Right cardiac atrium (tissue), 5 donors: ENCODE measurements at regions of chr12 and their contacts with region 1.

Region 1: DNA sequence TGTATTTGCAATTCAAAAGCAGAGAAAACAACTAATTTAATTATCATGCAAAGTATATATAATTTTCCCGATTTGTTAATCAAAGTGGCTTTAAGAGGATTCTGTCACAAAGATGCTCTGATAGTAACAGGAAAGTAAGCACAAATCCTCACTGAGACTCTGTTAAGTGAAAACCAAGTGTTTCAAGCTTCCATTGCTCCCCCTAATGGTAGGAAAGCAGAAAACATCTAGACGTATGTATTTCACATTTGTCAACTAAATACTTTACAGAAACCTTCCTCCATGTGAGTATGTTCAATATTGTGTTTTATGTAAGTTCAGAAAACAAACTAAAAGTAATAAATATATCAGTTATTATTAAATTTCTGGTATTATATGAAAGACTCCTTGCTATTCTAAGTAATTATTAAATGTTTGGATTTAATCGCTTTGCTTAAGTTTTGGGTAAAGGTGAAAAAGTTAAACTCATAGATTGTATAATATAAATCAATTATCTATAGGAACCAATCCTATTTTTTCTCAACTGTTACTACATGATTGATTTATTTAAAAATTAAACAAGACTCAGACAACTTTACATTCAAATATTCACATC is 1.5 kb upstream of the NTS start:
- DNase-seq: no peak
- ATAC-seq: no peak
- H3K4me3 ChIP-seq: no peak overlapping the region
- H3K27ac ChIP-seq: no peak overlapping the region
- H3K4me1 ChIP-seq: no peaks in the 10 kb centered on the region
- H3K27me3 ChIP-seq: no peaks in the 10 kb centered on the region

Region 2: DNA sequence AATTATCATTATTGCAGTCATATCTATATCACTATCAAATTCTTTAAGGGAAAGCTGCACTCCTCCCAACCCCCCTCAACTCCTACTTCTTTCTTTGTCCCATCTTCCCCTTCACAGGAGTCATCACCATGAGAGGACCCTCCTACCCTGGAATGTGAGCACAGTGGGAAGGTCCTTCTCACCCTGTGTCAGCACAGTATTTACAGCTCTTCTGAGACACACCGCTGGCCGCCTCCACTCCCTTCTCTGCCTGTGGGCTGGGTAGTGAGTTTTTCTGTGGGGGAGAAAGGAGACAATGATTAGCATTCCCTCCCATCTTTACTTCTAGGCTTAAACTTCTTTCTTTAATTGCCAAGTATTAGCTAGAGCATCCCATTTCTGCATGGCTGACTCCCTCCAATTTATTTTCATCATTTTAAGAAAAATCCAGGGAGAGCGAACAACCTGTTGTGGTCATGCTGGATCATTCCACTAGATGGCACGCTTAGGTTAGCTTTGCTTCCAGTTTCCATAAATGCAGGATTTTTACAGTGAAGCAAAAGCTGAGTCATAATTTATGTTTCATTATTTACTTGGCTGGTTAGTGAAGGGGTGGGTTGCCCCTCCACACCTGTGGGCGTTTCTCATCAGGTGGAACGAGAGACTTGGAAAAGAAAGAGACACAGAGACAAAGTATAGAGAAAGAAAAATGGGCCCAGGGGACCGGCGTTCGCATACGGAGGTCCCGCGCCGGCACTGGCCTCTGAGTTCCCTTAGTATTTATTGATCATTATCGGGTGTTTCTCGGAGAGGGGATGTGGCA is 404.0 kb before region 1 on chr12:
- intact Hi-C with region 1: loop called in 3 of 4 experiments (anchors 5 to 10 kb)
- DNase-seq: peak in 1 of 3 donors; percentile 34
- ATAC-seq: peak in 1 of 2 donors; percentile 65
- H3K4me3 ChIP-seq: peak overlapping the region; percentile 43
- H3K27ac ChIP-seq: no peak overlapping the region
- H3K4me1 ChIP-seq: no peaks in the 10 kb centered on the region
- H3K27me3 ChIP-seq: no peaks in the 10 kb centered on the region

Region 3: GRCh38 chr12:85476756-85477155 is 395.8 kb before region 1 on chr12:
- intact Hi-C with region 1: loop called (anchors 5 to 10 kb)
- DNase-seq: no peak
- ATAC-seq: no peak
- H3K4me3 ChIP-seq: no peak overlapping the region
- H3K27ac ChIP-seq: no peak overlapping the region
- H3K4me1 ChIP-seq: no peaks in the 10 kb centered on the region
- H3K27me3 ChIP-seq: no peaks in the 10 kb centered on the region